Ovary (tissue), 10 donors: ENCODE measurements at regions of chr17 and their contacts with region 1.

Region 1: GRCh38 chr17:80063830-80064585 is 27.6 kb downstream of the CCDC40 start:
- DNase-seq: peak; percentile 55 to 68 (median 64)
- H3K4me3 ChIP-seq: no peak overlapping the region
- H3K27ac ChIP-seq: no peak overlapping the region
- H3K4me1 ChIP-seq: peaks cover 15% of the 10 kb centered on the region
- H3K27me3 ChIP-seq: no peaks in the 10 kb centered on the region
- CTCF ChIP-seq: no peak
- EP300 ChIP-seq: no peak
- POLR2A ChIP-seq: no peak

Region 2: DNA sequence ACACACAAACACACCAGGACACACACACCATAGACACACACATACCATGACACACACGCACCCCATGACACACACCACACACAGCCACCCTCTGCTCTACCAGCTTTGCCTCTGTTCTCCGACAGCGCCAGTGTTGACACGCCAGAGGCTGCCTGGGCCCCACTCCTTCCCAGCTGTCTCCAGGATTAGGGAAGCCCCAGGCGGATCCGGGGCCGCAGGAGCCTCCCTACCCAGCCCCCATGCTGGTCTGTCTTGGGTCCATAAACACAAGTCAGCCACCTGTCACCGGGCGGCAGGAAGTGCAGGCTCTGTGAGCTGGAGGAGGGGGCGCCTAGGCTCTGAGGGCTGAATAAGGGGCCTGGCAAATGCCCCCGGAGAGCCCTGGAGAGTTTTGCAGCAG is 38.9 kb before region 1 on chr17:
- intact Hi-C with region 1: no loop called
- DNase-seq: no peak
- H3K4me3 ChIP-seq: no peak overlapping the region
- H3K27ac ChIP-seq: no peak overlapping the region
- H3K4me1 ChIP-seq: peaks cover 22% of the 10 kb centered on the region
- H3K27me3 ChIP-seq: no peaks in the 10 kb centered on the region
- CTCF ChIP-seq: no peak
- EP300 ChIP-seq: no peak
- POLR2A ChIP-seq: no peak

Region 3: DNA sequence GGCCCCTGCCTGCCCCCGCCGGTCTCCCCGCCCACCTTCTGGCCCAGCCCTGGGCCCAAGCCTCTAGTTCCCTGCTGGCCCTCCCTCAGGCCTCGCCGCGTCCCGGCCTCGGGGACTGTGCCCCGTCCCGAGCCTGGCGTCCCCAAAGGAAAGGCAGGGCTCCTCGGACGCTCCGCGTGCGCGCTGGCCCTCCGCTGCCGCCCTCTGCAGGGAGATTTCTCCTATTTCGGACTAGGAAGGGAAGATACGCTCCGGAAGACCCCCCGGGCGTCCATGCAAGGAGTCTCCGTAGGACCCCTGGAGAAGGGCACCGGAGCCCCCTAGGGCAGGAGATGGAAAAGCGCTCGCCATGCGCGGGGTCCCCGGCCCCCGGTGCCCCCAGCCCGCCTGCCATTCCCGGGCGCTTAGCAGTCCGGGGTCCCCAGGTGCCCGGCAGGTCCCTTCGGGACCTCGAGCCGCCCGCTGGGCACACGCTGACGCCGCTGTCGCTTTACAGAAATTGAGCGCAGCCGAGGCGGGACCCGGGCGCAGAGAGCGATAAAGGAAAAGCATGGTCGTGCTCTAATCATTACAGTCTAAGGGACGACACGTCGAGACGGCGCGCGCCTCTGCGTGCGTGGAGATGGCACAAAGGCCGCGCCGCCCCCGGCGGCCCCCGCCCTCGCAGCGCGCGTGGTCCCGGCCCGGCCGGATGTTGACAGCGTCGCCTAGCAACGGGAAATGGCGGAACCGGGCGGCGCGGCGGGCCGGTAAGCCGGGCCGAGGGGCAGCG is 27.9 kb before region 1 on chr17 and contains the start of gene CCDC40:
- intact Hi-C with region 1: loop called in 1 of 4 experiments (anchors 2 kb)
- DNase-seq: peak; percentile 78 to 88 (median 86)
- H3K4me3 ChIP-seq: peak within 1 kb of the TSS; percentile 59
- H3K27ac ChIP-seq: peak within 1 kb of the TSS; percentile 78 to 85
- H3K4me1 ChIP-seq: no peaks in the 10 kb centered on the region
- H3K27me3 ChIP-seq: no peaks in the 10 kb centered on the region
- CTCF ChIP-seq: peak in 1 of 3 donors; percentile 18
- EP300 ChIP-seq: no peak
- POLR2A ChIP-seq: peak; percentile 70
- total RNA-seq, gene CCDC40: 3.7 to 27.8 (median 6.0) TPM

Region 4: GRCh38 chr17:80111327-80112014 is 47.5 kb after region 1 on chr17:
- intact Hi-C with region 1: loop called in 1 of 4 experiments (anchors 1 kb)
- DNase-seq: no peak
- H3K4me3 ChIP-seq: no peak overlapping the region
- H3K27ac ChIP-seq: no peak overlapping the region
- H3K4me1 ChIP-seq: no peaks in the 10 kb centered on the region
- H3K27me3 ChIP-seq: no peaks in the 10 kb centered on the region
- CTCF ChIP-seq: no peak
- EP300 ChIP-seq: no peak
- POLR2A ChIP-seq: no peak

Region 5: DNA sequence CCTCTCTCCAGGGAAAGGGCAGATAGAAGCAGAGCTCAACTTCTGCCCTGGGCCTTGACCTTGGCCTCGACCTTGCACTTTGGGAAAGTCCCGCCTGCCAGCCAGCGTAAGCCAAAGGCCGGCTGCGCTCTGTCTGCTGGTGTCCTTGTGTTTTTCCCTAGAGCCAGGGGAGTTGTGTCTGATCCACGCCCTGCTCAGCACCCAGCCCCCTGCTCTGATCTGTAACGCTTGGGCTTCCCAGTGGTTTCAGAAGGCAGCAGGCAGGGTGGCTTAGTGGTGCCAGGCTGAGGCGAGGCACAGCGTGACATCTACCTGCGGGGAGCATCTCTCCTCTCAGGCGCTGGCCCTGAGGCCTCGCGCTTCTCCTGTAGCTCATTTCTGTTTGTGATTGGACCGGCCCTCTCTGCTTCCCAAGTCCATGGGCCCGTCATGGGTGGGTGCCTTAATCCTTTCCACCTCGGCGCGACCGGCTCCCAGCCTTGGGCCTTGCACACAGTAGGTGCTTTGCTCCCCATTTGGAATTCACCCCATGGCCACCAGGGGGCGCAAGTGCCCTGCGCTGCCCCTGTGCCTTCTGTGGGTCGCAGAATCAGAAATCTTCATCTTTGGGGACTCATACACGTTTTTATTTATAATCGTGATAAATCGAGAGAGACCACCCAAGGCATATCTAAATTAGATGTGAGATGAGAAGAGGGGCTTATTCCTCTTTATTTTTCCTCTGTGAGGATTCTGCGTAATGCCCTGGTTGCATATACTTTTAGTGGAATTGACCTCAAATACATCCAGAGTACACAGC is 131.9 kb after region 1 on chr17:
- intact Hi-C with region 1: no loop called
- DNase-seq: peak in 1 of 5 donors; percentile 33
- H3K4me3 ChIP-seq: no peak overlapping the region
- H3K27ac ChIP-seq: no peak overlapping the region
- H3K4me1 ChIP-seq: no peaks in the 10 kb centered on the region
- H3K27me3 ChIP-seq: no peaks in the 10 kb centered on the region
- CTCF ChIP-seq: peak; percentile 52 to 69 (median 58)
- EP300 ChIP-seq: no peak
- POLR2A ChIP-seq: no peak

Region 6: GRCh38 chr17:80219013-80219762 is 155.2 kb after region 1 on chr17:
- intact Hi-C with region 1: no loop called
- DNase-seq: peak; percentile 56 to 73 (median 71)
- H3K4me3 ChIP-seq: peak overlapping the region; percentile 99
- H3K27ac ChIP-seq: peak overlapping the region; percentile 26 to 65
- H3K4me1 ChIP-seq: peaks cover 10% of the 10 kb centered on the region
- H3K27me3 ChIP-seq: no peaks in the 10 kb centered on the region
- CTCF ChIP-seq: no peak
- EP300 ChIP-seq: no peak
- POLR2A ChIP-seq: no peak